KBM-7 (cell line): ENCODE measurements at regions of chr12 and their contacts with region 1.

Region 1: GRCh38 chr12:65278576-65279368 is at the start of gene MSRB3:
- DNase-seq: peak; percentile 24

Region 2: DNA sequence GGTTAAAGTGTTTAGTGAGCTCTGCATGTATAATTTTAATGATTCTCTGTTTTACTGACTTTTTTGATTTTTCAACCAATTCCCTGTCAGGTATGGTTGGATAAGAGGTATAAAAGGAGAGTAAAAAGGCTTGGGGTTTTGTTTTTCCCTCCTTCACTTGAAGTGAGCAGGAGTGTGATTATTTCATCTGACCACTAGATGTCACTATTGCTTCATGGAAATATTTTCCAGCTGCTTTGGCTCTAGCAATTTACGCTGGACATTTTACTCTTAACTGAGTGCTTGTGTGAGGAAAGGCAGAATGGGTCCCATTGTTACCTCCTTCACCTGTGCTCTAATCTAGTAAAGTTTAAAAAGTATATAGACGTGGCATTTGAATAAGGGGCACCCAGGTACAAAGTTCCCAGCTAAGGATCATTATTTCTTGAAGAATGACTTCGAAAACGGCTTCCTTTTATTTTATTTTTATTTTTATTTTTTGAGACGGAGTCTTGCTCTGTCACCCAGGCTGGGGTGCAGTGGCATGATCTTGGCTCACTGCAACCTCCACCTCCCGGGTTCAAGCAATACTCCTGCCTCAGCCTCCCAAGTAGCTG is 387.8 kb before region 1 on chr12:
- in situ Hi-C with region 1: loop called (anchors 25 kb)
- DNase-seq: peak; percentile 70